MCF 10A (cell line): ENCODE measurements at regions of chr15 and their contacts with region 1.

Region 1: GRCh38 chr15:90886041-90886614 is 1.8 kb downstream of the FES start:
- DNase-seq: peak; percentile 55
- H3K4me3 Mint-ChIP-seq: no peak overlapping the region
- H3K27ac Mint-ChIP-seq: no peak overlapping the region
- H3K4me1 Mint-ChIP-seq: no peaks in the 10 kb centered on the region
- H3K27me3 Mint-ChIP-seq: no peaks in the 10 kb centered on the region
- CTCF ChIP-seq: peak; percentile 98

Region 2: DNA sequence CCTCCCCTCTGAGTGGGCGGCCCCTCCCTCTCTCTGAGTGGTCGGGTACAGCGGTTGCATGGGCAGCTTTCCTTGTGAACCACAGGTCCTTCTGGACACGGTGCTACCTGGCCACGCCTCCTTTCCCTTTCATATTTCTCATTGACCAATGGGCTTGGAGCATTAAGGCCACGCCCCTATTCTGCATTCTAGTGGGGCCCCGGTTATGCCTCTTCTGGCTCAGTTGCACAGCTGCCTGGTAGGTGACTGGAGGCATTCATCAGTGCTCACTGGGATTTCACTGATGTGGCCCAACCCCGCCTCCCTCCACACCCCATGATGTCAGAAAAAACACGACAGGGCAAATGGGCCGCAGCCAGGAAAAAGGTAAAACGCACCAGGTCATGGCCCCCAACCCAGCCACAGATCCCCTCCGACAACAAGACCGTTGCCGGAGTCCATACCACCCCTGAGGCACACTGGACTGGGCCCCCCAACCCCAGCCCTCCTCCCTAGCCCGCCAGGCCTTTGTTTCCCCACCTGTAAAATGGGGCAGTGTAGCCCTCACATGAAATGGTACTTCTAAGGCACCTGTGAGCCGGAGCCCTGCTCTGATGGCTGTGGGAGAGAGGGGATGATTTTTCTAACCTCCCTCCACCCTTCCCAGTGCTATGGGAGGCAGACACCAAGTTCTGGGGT is 594.3 kb before region 1 on chr15:
- CTCF ChIA-PET with region 1: interaction called, 8 read pairs
- POLR2A ChIA-PET with region 1: no interaction called
- intact Hi-C with region 1: loop called (anchors 1 kb)
- DNase-seq: peak; percentile 69
- H3K4me3 Mint-ChIP-seq: no peak overlapping the region
- H3K27ac Mint-ChIP-seq: no peak overlapping the region
- H3K4me1 Mint-ChIP-seq: peaks cover 6% of the 10 kb centered on the region
- H3K27me3 Mint-ChIP-seq: no peaks in the 10 kb centered on the region
- CTCF ChIP-seq: no peak

Region 3: GRCh38 chr15:90583471-90584252 is 302.5 kb before region 1 on chr15:
- CTCF ChIA-PET with region 1: no interaction called
- POLR2A ChIA-PET with region 1: no interaction called
- intact Hi-C with region 1: no loop called
- DNase-seq: no peak
- H3K4me3 Mint-ChIP-seq: no peak overlapping the region
- H3K27ac Mint-ChIP-seq: no peak overlapping the region
- H3K4me1 Mint-ChIP-seq: no peaks in the 10 kb centered on the region
- H3K27me3 Mint-ChIP-seq: no peaks in the 10 kb centered on the region
- CTCF ChIP-seq: no peak

Region 4: DNA sequence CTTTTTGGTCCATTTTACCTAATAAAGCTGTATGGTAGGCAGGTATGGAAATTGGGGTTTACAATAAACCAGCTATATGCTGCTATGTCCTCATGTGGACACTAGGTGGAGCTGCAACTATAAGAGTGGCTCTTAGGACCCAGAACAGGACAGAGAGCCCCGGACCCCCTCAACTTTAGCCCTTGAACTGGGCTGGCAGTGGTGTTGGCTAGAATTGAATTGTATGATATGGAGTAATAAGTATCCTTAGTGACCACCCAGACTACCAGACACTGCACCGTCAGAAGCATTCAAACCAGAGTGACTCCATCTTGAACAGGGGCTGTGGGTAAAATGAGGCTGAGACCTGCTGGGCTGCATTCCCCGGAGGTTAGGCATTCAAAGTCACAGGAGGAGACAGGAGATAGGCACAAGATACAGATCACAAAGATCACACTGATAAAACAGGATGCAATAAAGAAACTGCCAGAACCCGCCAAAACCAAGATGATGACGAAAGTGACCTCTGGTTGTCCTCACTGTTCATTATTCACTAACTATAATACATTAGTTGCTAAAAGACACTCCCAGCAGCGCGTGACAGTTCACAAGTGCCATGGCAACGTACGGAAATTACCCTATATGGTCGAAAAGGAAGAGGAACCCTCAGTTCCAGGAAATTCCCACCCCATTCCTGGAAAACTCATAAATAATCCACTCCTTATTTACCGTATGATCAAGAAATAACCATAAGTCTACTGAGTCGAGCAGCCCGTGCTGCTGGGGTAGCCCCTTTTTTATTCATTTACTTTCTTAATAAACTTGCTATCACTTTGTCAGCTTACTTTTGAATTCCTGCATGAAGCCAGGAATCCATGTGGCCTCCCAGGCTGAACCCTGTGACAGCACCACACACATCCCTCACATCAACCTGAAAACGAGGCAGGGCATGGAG is 237.7 kb before region 1 on chr15:
- CTCF ChIA-PET with region 1: interaction called, 38 read pairs
- POLR2A ChIA-PET with region 1: interaction called, 5 read pairs
- intact Hi-C with region 1: loop called (anchors 1 kb)
- DNase-seq: peak; percentile 78
- H3K4me3 Mint-ChIP-seq: peak overlapping the region; percentile 20
- H3K27ac Mint-ChIP-seq: no peak overlapping the region
- H3K4me1 Mint-ChIP-seq: peaks cover 7% of the 10 kb centered on the region
- H3K27me3 Mint-ChIP-seq: no peaks in the 10 kb centered on the region
- CTCF ChIP-seq: peak; percentile 90

Region 5: DNA sequence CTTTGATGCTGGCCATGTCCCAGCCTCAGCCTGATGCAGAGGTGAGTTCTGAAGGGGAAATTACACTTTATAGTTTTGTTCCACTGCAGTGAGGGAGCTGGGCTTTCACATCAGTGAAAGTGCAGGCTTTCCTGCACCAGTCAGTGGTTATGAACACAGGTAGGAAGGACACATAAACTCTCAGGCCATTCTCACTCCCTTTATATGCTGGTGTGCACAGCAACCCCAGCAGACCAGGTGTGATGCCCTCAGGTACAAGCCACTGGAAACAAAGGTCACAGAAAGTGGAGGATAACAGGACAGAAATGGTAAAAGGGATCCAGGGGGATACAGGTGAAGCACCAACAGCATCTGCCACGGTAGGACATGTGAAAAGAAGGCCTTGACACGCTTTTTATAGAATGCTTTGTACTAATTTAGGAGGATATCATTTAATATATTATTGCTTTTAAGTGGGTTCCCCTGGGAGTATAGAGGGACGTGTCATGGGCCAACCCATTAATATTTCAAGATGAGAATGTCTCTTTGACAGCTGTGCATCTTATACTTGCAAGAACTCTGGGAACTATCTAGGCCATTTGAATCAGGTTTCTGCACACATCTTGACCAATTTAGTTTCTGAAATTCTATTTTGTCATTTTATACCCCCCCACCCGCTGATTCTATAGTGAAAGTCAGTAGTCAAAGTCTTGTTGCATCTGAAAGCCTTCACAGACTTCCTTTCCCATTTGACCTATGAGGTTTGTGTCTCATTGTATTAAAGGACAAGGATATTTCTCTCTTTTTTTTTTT is 193.9 kb before region 1 on chr15:
- CTCF ChIA-PET with region 1: interaction called, 16 read pairs
- POLR2A ChIA-PET with region 1: no interaction called
- intact Hi-C with region 1: loop called (anchors 1 kb)
- DNase-seq: no peak
- H3K4me3 Mint-ChIP-seq: no peak overlapping the region
- H3K27ac Mint-ChIP-seq: no peak overlapping the region
- H3K4me1 Mint-ChIP-seq: no peaks in the 10 kb centered on the region
- H3K27me3 Mint-ChIP-seq: peaks cover 10% of the 10 kb centered on the region
- CTCF ChIP-seq: no peak

Region 6: DNA sequence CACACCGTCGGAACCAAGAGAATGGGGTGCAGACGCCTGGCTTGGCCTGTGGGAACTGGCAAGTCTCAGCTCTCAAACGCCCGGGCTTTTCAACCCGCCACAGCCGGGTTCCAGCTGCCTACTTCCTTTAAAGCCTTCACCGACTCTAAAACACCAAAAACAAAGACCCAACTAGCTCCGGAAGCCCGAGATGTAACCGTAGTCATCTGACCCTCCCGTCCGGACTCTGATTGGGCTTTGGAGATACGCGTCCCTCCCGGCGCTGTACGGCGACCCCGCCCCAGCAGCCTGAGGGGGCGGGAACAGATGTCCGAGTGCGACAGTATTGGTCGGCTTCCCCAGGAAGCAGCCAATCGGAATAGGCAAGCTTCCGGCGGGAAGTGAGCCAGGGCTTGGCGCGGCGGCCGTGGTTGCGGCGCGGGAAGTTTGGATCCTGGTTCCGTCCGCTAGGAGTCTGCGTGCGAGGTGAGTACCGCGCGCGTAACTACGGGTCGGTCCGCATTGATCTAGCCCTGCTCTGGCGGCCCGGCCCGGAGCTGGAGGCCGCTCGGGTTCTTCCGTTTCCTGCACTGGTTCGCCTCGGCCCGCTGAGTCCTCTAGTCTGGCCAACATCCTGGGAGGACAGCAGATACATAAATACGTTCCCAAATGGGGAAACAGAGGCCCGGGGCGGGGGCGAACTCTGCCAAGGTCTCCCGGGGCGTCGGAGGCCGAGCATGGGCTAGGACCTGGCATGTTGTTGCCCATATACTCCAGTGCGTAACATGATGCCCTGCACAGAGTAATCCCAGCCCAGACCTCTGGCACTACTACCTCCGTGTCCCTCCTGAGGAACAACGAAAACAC is 168.9 kb before region 1 on chr15 and contains the start of gene BLM:
- CTCF ChIA-PET with region 1: interaction called, 14 read pairs
- POLR2A ChIA-PET with region 1: no interaction called
- intact Hi-C with region 1: loop called (anchors 1 kb)
- DNase-seq: peak; percentile 97
- H3K4me3 Mint-ChIP-seq: peak within 1 kb of the TSS; percentile 95
- H3K27ac Mint-ChIP-seq: peak within 1 kb of the TSS; percentile 88
- H3K4me1 Mint-ChIP-seq: peaks cover 13% of the 10 kb centered on the region
- H3K27me3 Mint-ChIP-seq: no peaks in the 10 kb centered on the region
- CTCF ChIP-seq: peak; percentile 22
- total RNA-seq, gene BLM: 2.8 and 5.2 TPM in 2 replicates

Region 7: GRCh38 chr15:90902040-90902839 is 16.1 kb after region 1 on chr15:
- CTCF ChIA-PET with region 1: interaction called, 83 read pairs
- POLR2A ChIA-PET with region 1: interaction called, 4 read pairs
- intact Hi-C with region 1: no loop called
- DNase-seq: peak; percentile 81
- H3K4me3 Mint-ChIP-seq: peak overlapping the region; percentile 82
- H3K27ac Mint-ChIP-seq: peak overlapping the region; percentile 57
- H3K4me1 Mint-ChIP-seq: peaks cover 10% of the 10 kb centered on the region
- H3K27me3 Mint-ChIP-seq: no peaks in the 10 kb centered on the region
- CTCF ChIP-seq: peak; percentile 62